ENCODE measurements at regions of chr1 and their contacts with region 1.

Region 1: DNA sequence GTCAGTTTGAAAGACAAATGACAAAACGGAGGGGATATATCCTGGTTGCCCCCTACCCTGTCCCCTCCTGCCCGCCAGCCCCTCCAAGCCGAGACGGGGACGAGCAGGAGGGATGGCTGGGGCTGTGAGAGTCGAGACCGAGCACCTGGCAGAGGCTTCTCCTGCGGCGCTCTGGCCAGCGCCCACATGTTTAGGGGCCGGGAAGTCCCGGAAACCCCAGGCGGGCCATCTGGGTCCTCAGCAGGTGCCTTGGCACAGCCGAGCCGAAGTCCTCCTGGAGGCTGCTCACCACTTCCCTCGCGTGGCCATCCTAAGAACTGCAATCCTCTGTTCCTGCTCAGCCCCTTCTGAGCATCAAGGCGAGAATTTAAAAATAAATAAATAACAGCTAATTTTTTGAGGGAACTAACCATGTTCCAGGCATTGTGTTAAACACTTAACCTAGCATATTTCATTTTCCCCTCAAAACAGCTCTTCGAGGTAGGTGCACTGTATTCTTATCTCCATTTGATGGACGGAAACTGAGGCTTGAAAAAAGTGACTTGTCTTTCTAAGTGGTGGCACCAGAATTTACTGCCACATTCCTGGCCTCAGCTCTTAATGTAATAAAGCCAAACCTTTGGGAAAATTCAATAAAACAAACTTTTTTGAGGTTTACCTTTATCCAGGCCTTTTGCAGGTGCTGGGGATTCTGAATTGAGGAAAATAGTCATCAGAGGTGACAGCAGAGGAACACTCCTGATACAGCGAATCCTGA is 3.5 kb upstream of the RIMS3 start:
- DNase-seq: peak; percentile 88 to 91 (median 89)
- ATAC-seq: peak; percentile 82
- H3K4me3 ChIP-seq: no peak overlapping the region
- H3K4me1 ChIP-seq: peaks cover 11% of the 10 kb centered on the region
- CTCF ChIP-seq: peak; percentile 93

Region 2: DNA sequence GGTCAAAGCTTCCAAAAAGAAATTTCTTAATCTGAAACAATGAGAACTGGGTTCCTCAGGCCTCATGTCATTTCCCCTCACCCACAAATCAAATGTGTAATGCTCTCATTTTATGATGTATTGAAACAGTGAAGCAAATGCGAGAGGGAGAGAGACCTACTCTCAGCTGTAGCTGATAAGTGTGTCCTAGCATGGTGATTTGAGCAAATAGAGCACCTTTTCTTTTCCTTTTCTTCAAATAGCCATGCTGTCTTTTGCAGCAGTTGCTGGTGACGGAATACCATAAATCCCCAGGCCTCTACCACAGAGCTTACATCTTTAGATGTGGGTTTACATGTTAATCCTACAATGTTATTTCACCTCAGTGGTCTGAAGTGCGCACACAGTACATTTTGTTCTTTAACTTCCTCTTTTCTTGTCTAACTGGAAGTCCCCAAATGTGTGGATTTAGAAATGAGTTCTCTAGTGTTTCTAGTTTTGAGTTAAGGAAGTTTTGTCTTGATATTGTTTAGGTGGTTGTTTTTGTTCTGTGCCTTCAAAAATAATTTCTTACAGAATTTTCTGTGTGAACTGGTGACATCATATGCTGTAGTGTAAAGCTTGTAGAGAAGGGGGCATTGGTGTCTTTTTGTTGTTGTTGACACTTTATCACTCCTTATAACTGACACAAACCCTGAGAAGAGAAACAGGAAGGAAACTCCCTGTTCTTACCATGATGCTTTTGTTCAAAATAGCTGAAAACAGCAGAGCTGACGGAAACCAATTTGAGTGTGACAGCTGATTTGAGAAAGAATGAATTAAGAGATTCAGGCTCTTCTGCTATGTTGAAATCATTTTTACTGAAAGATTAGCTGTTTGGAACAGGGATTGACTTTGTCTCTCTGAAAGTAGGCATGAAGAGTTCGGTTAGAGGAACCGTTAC is 283.2 kb before region 1 on chr1:
- intact Hi-C with region 1: no loop called
- DNase-seq: no peak
- ATAC-seq: peak; percentile 63
- H3K4me3 ChIP-seq: no peak overlapping the region
- H3K4me1 ChIP-seq: peaks cover 43% of the 10 kb centered on the region
- CTCF ChIP-seq: no peak

Region 3: DNA sequence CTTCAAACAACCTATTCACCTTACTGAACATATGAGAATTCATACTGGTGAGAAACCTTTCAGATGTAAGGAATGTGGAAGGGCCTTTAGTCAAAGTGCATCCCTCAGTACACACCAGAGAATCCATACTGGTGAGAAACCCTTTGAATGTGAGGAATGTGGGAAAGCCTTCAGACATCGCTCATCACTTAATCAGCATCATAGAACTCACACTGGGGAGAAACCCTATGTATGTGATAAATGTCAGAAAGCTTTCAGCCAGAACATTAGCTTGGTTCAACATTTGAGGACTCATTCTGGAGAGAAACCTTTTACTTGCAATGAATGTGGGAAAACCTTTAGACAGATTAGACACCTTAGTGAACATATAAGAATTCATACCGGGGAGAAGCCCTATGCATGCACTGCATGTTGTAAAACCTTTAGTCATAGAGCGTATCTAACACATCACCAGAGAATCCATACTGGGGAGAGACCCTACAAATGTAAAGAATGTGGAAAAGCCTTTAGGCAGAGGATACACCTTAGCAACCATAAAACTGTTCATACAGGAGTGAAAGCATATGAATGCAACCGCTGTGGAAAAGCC is 173.5 kb before region 1 on chr1:
- intact Hi-C with region 1: no loop called
- DNase-seq: no peak
- ATAC-seq: no peak
- H3K4me3 ChIP-seq: no peak overlapping the region
- H3K4me1 ChIP-seq: no peaks in the 10 kb centered on the region
- CTCF ChIP-seq: no peak

Region 4: DNA sequence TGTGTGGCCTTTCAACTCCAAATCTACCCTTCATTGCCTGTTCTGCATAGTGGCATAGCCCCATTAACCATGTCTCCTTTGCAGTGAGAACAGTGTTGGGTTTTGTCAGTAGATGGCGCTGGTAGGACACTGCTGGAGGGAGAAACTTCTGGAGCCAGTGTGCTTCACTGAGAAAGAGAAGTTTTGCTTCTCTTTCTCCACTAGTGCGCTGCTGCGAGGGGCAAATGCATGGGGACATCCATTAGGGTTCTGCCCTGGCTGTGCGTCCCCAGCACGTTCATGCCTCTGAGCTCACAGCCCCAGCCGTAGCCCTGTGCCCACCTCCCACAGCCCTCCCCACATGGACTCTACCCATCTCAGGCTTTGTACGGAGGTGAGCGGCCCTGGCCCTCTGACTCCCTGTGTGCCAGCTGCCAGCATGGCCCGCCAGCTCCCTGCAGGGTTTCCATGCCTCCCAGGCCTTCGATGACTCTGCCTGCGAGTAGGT is 56.6 kb before region 1 on chr1:
- intact Hi-C with region 1: loop called in 1 of 2 experiments (anchors 10 kb)
- DNase-seq: peak in 2 of 3 donors; percentile 53 to 89
- ATAC-seq: peak; percentile 85
- H3K4me3 ChIP-seq: no peak overlapping the region
- H3K4me1 ChIP-seq: no peaks in the 10 kb centered on the region
- CTCF ChIP-seq: peak; percentile 64

Region 5: GRCh38 chr1:40980453-40981121 is 311.6 kb after region 1 on chr1:
- intact Hi-C with region 1: no loop called
- DNase-seq: peak; percentile 16 to 64 (median 29)
- ATAC-seq: no peak
- H3K4me3 ChIP-seq: peak overlapping the region; percentile 56
- H3K4me1 ChIP-seq: no peaks in the 10 kb centered on the region
- CTCF ChIP-seq: no peak

Measured in mucosa of descending colon (tissue), 3 donors.